Caco-2 (cell line): ENCODE measurements at regions of chr15 and their contacts with region 1.

Region 1: GRCh38 chr15:60507596-60508424 is 28.9 kb upstream of the ICE2 start:
- DNase-seq: peak in 1 of 2 experiments; percentile 60
- H3K4me3 ChIP-seq: no peak overlapping the region
- H3K4me3 Mint-ChIP-seq: no peak overlapping the region
- H3K27ac Mint-ChIP-seq: no peak overlapping the region
- H3K4me1 ChIP-seq: peaks cover 4% of the 10 kb centered on the region
- H3K4me1 Mint-ChIP-seq: peaks cover 13% of the 10 kb centered on the region
- H3K27me3 ChIP-seq: no peaks in the 10 kb centered on the region
- H3K27me3 Mint-ChIP-seq: no peaks in the 10 kb centered on the region
- CTCF ChIP-seq: peak; percentile 83 to 84

Region 2: GRCh38 chr15:60520825-60521368 is 13.1 kb after region 1 on chr15:
- CTCF ChIA-PET with region 1: interaction called, 14 read pairs
- POLR2A ChIA-PET with region 1: interaction called, 3 read pairs
- intact Hi-C with region 1: no loop called
- DNase-seq: peak; percentile 60 to 78
- H3K4me3 ChIP-seq: no peak overlapping the region
- H3K4me3 Mint-ChIP-seq: no peak overlapping the region
- H3K27ac Mint-ChIP-seq: no peak overlapping the region
- H3K4me1 ChIP-seq: no peaks in the 10 kb centered on the region
- H3K4me1 Mint-ChIP-seq: peaks cover 11% of the 10 kb centered on the region
- H3K27me3 ChIP-seq: no peaks in the 10 kb centered on the region
- H3K27me3 Mint-ChIP-seq: no peaks in the 10 kb centered on the region
- CTCF ChIP-seq: peak; percentile 83 to 86

Region 3: DNA sequence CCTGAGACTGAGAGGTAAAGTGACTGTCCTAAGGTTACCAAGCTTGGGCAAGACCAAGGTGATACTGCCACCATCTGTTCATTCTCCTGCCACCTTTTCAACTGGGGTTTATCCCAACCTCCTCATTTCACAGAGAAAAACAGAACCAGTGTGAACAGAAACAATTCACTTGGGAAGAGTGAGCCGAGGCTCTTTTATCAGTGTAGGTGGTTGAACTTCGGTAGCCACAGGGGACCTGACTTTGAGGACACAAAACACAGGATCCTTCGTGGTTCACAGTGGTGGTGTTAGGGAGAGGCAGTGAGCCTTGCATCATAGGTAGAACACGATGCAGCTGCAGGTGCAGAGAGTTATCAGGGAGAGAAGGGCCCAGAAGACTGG is 44.0 kb after region 1 on chr15:
- CTCF ChIA-PET with region 1: interaction called, 4 read pairs
- POLR2A ChIA-PET with region 1: no interaction called
- intact Hi-C with region 1: loop called (anchors 1 kb)
- DNase-seq: peak; percentile 59 to 60
- H3K4me3 ChIP-seq: no peak overlapping the region
- H3K4me3 Mint-ChIP-seq: peak overlapping the region; percentile 60
- H3K27ac Mint-ChIP-seq: peak overlapping the region; percentile 93
- H3K4me1 ChIP-seq: peaks cover 37% of the 10 kb centered on the region
- H3K4me1 Mint-ChIP-seq: peaks cover 42% of the 10 kb centered on the region
- H3K27me3 ChIP-seq: no peaks in the 10 kb centered on the region
- H3K27me3 Mint-ChIP-seq: no peaks in the 10 kb centered on the region
- CTCF ChIP-seq: peak in 1 of 2 experiments; percentile 25

Region 4: GRCh38 chr15:60585743-60586708 is 78.2 kb after region 1 on chr15:
- CTCF ChIA-PET with region 1: no interaction called
- POLR2A ChIA-PET with region 1: no interaction called
- intact Hi-C with region 1: loop called (anchors 1 kb)
- DNase-seq: peak; percentile 57 to 76
- H3K4me3 ChIP-seq: no peak overlapping the region
- H3K4me3 Mint-ChIP-seq: peak overlapping the region; percentile 5
- H3K27ac Mint-ChIP-seq: no peak overlapping the region
- H3K4me1 ChIP-seq: peaks cover 35% of the 10 kb centered on the region
- H3K4me1 Mint-ChIP-seq: peaks cover 30% of the 10 kb centered on the region
- H3K27me3 ChIP-seq: no peaks in the 10 kb centered on the region
- H3K27me3 Mint-ChIP-seq: no peaks in the 10 kb centered on the region
- CTCF ChIP-seq: peak; percentile 73 to 78

Region 5: DNA sequence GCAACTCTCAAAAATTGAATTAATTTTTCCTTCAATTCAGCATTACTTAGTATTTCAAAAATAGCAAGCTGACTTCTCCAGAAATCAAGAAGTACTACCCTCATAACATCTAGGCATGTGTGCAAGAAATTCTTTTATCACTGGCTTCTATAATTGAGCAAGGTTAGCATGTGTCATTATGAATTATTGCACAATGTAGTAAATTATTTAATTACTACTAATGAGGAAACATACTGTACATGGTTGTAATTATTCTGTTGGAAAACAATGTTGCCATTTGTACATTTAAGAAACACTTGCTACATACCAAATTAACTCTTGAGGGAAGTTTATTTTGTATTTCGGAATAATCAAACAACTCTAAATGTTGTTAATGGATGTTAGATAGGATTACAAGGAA is 93.3 kb after region 1 on chr15:
- CTCF ChIA-PET with region 1: no interaction called
- POLR2A ChIA-PET with region 1: no interaction called
- intact Hi-C with region 1: no loop called
- DNase-seq: no peak
- H3K4me3 ChIP-seq: no peak overlapping the region
- H3K4me3 Mint-ChIP-seq: no peak overlapping the region
- H3K27ac Mint-ChIP-seq: no peak overlapping the region
- H3K4me1 ChIP-seq: no peaks in the 10 kb centered on the region
- H3K4me1 Mint-ChIP-seq: no peaks in the 10 kb centered on the region
- H3K27me3 ChIP-seq: no peaks in the 10 kb centered on the region
- H3K27me3 Mint-ChIP-seq: peaks cover 13% of the 10 kb centered on the region
- CTCF ChIP-seq: no peak

Region 6: GRCh38 chr15:60916679-60917460 is 409.1 kb after region 1 on chr15:
- CTCF ChIA-PET with region 1: interaction called, 4 read pairs
- POLR2A ChIA-PET with region 1: no interaction called
- intact Hi-C with region 1: loop called (anchors 5 kb)
- DNase-seq: peak; percentile 69 to 76
- H3K4me3 ChIP-seq: no peak overlapping the region
- H3K4me3 Mint-ChIP-seq: no peak overlapping the region
- H3K27ac Mint-ChIP-seq: no peak overlapping the region
- H3K4me1 ChIP-seq: peaks cover 31% of the 10 kb centered on the region
- H3K4me1 Mint-ChIP-seq: peaks cover 21% of the 10 kb centered on the region
- H3K27me3 ChIP-seq: no peaks in the 10 kb centered on the region
- H3K27me3 Mint-ChIP-seq: no peaks in the 10 kb centered on the region
- CTCF ChIP-seq: peak; percentile 55 to 66